Activated CD4-positive, alpha-beta memory T cell treated with anti-CD3 and anti-CD28 coated beads, Interleukin-2, amount 10 ng/mL, durations not matched to agents 7 days and 5 days (primary cell): ENCODE measurements at regions of chr4 and their contacts with region 1.

Region 1: GRCh38 chr4:143558823-143559756 is 45.6 kb downstream of the SMARCA5 start:
- DNase-seq: peak; percentile 68
- H3K4me3 Mint-ChIP-seq: peak overlapping the region; percentile 83
- H3K27ac Mint-ChIP-seq: peak overlapping the region; percentile 67
- H3K4me1 Mint-ChIP-seq: peaks cover 25% of the 10 kb centered on the region
- H3K27me3 Mint-ChIP-seq: no peaks in the 10 kb centered on the region

Region 2: DNA sequence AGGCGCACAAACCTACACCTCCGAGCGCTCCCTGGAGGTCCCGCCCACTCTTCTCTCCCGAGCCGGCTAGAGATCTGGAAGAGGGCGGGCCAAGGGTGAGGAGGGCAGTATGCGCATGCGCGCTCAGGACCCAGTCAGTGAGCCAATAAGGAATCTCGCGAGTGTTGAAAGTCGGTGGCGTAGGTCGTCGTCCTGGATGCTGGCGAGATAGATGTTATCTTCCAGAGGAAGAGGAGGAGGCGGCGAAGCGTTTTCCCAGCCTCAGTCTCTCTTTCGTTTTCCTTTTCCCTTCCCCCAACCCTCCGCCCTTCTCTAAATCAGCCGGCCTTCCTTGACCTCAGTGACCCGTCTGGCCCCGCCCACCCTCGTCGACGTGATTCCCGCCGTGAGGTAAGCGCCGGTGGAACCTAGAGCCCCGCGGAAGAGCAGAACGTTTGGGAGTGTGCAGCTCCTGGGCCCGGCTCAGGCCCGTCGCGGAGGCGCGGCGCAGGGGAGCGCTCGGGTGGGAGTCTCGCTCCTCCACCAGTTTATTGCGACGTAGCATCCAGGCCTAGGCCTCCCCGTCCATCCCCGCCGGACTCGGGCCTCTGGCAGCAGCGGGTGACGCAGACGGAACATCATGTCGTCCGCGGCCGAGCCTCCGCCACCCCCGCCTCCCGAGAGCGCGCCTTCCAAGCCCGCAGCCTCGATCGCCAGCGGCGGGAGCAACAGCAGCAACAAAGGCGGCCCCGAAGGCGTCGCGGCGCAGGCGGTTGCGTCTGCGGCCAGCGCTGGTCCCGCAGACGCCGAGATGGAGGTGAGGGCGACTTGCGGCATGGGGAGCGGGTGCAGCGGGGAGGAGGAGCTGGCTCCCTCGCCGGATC is 45.6 kb before region 1 on chr4 and contains the start of gene SMARCA5:
- CTCF ChIA-PET with region 1: interaction called, 10 read pairs
- POLR2A ChIA-PET with region 1: interaction called, 10 read pairs
- DNase-seq: peak; percentile 96
- H3K4me3 Mint-ChIP-seq: peak within 1 kb of the TSS; percentile 94
- H3K27ac Mint-ChIP-seq: peak within 1 kb of the TSS; percentile 89
- H3K4me1 Mint-ChIP-seq: peaks cover 30% of the 10 kb centered on the region
- H3K27me3 Mint-ChIP-seq: peaks cover 11% of the 10 kb centered on the region
- total RNA-seq, gene SMARCA5: 51.7 to 53.3 TPM

Region 3: DNA sequence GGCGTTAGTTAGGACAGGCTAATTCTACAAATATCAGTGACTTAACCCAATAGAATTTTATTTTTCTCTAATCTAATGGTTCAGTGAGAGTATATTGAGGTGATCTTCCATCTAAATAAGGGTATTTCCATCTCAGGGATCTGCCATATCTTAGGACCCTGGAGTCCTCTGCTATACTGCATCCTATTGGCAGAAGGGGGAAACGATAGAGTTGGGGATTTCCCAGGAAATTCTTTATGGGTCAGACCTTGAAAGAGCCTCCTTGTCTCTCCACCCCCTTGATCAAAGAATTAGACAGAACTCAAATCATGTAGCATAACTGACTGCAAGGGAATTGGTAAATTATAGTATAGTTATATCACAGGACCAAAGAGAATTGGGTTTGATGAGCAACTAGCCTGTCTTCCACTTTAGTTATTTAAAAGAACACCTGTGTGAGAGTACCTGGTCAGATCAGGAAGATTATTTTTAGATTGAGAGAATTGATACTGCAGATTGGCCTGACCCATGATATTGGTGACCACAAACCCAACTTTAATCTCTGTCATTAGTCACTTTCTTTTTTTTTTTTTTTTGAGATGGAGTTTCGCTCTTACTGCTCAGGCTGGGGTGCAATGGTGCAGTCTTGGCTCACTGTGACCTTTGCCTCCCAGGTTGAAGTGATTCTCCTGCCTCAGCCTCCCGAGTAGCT is 20.0 kb before region 1 on chr4:
- CTCF ChIA-PET with region 1: interaction called, 14 read pairs
- POLR2A ChIA-PET with region 1: interaction called, 4 read pairs
- DNase-seq: no peak
- H3K4me3 Mint-ChIP-seq: no peak overlapping the region
- H3K27ac Mint-ChIP-seq: no peak overlapping the region
- H3K4me1 Mint-ChIP-seq: peaks cover 10% of the 10 kb centered on the region
- H3K27me3 Mint-ChIP-seq: no peaks in the 10 kb centered on the region

Region 4: GRCh38 chr4:143653031-143653430 is 93.9 kb after region 1 on chr4:
- CTCF ChIA-PET with region 1: no interaction called
- POLR2A ChIA-PET with region 1: no interaction called
- DNase-seq: no peak
- H3K4me3 Mint-ChIP-seq: no peak overlapping the region
- H3K27ac Mint-ChIP-seq: no peak overlapping the region
- H3K4me1 Mint-ChIP-seq: no peaks in the 10 kb centered on the region
- H3K27me3 Mint-ChIP-seq: no peaks in the 10 kb centered on the region